ENCODE measurements at regions of chr3 and their contacts with region 1.

Region 1: DNA sequence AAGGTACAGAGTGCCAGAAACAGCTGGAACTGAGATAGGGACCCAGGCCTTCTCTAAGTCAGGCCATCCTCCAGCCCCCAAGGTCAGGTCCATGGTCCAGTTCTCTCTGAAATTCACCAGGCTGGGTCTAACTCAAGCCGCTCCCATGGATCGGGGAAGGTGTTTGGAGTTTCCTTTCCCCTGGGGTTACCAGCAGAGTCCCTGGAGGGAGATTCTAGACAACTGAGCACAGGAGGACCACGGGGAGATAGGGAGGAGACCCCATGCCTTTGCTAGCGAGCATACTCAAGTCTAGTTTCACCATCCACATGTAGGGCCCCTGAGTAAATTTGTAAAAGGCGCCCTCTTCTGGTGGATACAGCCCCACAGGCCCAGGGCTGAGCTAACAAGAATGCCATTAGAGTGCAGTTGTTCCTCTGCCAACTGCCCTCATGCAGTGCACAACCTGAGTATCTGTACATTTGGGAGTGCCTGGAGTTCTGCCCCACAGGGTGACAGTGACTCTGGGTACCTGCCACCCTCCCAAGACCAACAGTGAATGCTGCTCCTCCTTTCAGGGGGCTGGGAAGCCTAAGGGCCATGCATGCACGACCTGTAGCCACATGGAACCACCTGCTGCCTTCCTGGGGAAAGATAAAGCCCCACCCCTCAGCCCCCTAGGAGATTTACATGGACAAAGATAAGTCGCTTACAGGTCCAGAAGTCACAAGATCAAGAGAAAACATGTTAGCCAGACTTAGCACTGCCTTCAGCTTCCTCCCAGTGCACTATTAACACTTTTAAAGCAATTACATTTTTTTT is 89.0 kb downstream of the IQSEC1 start:
- DNase-seq: peak; percentile 79
- ATAC-seq: peak; percentile 96
- H3K4me3 ChIP-seq: peak overlapping the region in 2 of 3 experiments; percentile 29 to 37; a peak in 4 of 6 replicates
- H3K27ac ChIP-seq: peak overlapping the region; percentile 31
- H3K4me1 ChIP-seq: peaks cover 15% of the 10 kb centered on the region
- H3K27me3 ChIP-seq: no peaks in the 10 kb centered on the region
- CTCF ChIP-seq: peak; percentile 94
- EP300 ChIP-seq: no peak
- POLR2A ChIP-seq: no peak
- RAD21 ChIP-seq: peak; percentile 90

Region 2: DNA sequence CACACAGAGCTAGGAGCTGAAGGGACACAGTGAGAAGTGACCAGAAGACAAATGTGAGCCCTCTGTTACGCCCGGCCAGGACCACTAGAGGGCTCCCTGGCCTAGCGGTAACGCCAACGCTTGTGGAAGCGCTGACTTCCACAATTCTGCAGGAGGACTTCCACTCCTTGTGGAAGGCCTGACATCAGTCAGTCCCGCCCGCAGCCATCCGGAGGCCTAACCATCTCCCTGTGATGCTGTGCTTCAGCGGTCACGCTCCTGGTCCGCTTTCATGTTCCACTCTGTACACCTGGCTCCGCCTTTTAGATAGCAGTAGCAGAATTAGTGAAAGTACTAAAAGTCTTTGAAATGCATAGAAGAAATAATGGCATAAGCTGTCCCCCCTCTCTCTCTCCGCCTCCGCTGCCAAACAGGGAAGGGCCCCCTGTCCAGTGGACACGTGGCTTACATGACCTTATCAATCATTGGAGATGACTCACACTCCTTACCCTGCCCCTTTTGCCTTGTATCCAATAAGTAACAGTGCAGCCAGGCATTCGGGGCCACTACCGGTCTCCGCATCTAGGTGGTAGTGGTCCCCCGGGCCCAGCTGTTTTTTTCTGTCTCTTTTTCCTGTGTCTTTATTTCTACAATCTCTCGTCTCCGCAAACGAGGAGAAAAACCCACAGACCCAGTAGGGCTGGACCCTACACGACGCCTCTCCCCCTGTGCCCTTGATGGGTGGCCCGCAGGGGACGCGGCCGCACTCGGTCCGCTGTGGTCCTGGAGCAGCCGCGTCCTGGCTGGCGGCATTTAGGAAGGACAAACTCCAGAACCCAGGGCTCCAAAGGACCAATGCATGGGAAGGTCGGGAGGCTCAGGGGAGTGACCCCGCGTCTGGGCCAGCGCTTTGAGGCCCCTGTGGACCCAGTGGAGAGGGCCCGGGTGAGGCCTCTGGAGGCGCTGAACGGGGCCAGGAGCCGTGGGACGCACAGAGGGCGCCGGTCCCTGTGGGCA is 115.9 kb before region 1 on chr3:
- CTCF ChIA-PET with region 1: interaction called, 5 read pairs
- POLR2A ChIA-PET with region 1: no interaction called
- in situ Hi-C with region 1: no loop called
- intact Hi-C with region 1: loop called (anchors 1 kb)
- DNase-seq: peak; percentile 77
- ATAC-seq: peak; percentile 89
- H3K4me3 ChIP-seq: peak overlapping the region in 1 of 3 experiments; percentile 23; a peak in 2 of 6 replicates
- H3K27ac ChIP-seq: no peak overlapping the region
- H3K4me1 ChIP-seq: no peaks in the 10 kb centered on the region; the same call in 1 of the 2 replicates
- H3K27me3 ChIP-seq: peaks cover 2 to 62% of the 10 kb centered on the region in 2 experiments
- CTCF ChIP-seq: peak; percentile 95
- EP300 ChIP-seq: no peak
- POLR2A ChIP-seq: no peak
- RAD21 ChIP-seq: peak; percentile 91

Region 3: GRCh38 chr3:12901623-12902045 is 82.6 kb before region 1 on chr3:
- CTCF ChIA-PET with region 1: no interaction called
- POLR2A ChIA-PET with region 1: no interaction called
- in situ Hi-C with region 1: no loop called
- intact Hi-C with region 1: loop called (anchors 1 kb)
- DNase-seq: peak; percentile 21
- ATAC-seq: peak; percentile 70
- H3K4me3 ChIP-seq: no peak overlapping the region
- H3K27ac ChIP-seq: peak overlapping the region; percentile 32
- H3K4me1 ChIP-seq: peaks cover 18% of the 10 kb centered on the region
- H3K27me3 ChIP-seq: no peaks in the 10 kb centered on the region; a peak in 1 of 5 replicates
- CTCF ChIP-seq: peak; percentile 59
- EP300 ChIP-seq: no peak
- POLR2A ChIP-seq: no peak
- RAD21 ChIP-seq: 0 out of 2 replicates have a peak, but pooled peaks have one; percentile 31

Region 4: GRCh38 chr3:12948891-12949711 is 35.1 kb before region 1 on chr3:
- CTCF ChIA-PET with region 1: interaction called, 4 read pairs
- POLR2A ChIA-PET with region 1: interaction called, 3 read pairs
- in situ Hi-C with region 1: no loop called
- intact Hi-C with region 1: loop called (anchors 5 kb)
- DNase-seq: no peak
- ATAC-seq: no peak; the same call in 2 of the 3 replicates
- H3K4me3 ChIP-seq: no peak overlapping the region
- H3K27ac ChIP-seq: no peak overlapping the region
- H3K4me1 ChIP-seq: peaks cover 22% of the 10 kb centered on the region
- H3K27me3 ChIP-seq: no peaks in the 10 kb centered on the region
- CTCF ChIP-seq: no peak
- EP300 ChIP-seq: no peak
- POLR2A ChIP-seq: no peak
- RAD21 ChIP-seq: no peak